ENCODE measurements at regions of chr7 and their contacts with region 1.

Region 1: GRCh38 chr7:103094102-103094501 is 19.2 kb downstream of the ARMC10 start:
- DNase-seq: peak; percentile 38
- ATAC-seq: peak; percentile 50
- H3K4me3 ChIP-seq: no peak overlapping the region
- H3K27ac ChIP-seq: no peak overlapping the region
- H3K4me1 ChIP-seq: no peaks in the 10 kb centered on the region
- H3K27me3 ChIP-seq: no peaks in the 10 kb centered on the region
- CTCF ChIP-seq: peak; percentile 55

Region 2: DNA sequence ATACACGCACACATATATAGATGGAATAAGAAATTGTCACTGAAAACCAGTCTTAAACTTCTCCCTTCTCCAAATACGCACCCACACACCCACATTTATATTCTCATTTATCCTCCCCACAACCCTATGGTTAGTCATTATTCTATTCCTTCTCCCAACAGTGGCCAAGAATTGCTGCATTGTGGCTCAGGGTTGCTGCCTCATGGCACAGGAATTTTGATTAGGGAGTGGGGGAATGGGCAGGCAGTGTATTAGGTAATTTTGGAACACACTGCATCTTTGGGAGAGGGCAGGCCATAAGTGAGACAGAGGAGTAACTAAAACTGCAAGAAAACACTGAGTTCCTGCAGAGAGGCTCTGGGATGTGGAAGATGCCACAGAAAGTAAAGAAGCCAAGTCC is 19.1 kb after region 1 on chr7:
- CTCF ChIA-PET with region 1: no interaction called
- POLR2A ChIA-PET with region 1: no interaction called
- intact Hi-C with region 1: loop called (anchors 2 kb)
- DNase-seq: peak; percentile 95
- ATAC-seq: peak; percentile 99
- H3K4me3 ChIP-seq: no peak overlapping the region
- H3K27ac ChIP-seq: peak overlapping the region; percentile 72
- H3K4me1 ChIP-seq: peaks cover 11% of the 10 kb centered on the region
- H3K27me3 ChIP-seq: no peaks in the 10 kb centered on the region
- CTCF ChIP-seq: no peak

Region 3: DNA sequence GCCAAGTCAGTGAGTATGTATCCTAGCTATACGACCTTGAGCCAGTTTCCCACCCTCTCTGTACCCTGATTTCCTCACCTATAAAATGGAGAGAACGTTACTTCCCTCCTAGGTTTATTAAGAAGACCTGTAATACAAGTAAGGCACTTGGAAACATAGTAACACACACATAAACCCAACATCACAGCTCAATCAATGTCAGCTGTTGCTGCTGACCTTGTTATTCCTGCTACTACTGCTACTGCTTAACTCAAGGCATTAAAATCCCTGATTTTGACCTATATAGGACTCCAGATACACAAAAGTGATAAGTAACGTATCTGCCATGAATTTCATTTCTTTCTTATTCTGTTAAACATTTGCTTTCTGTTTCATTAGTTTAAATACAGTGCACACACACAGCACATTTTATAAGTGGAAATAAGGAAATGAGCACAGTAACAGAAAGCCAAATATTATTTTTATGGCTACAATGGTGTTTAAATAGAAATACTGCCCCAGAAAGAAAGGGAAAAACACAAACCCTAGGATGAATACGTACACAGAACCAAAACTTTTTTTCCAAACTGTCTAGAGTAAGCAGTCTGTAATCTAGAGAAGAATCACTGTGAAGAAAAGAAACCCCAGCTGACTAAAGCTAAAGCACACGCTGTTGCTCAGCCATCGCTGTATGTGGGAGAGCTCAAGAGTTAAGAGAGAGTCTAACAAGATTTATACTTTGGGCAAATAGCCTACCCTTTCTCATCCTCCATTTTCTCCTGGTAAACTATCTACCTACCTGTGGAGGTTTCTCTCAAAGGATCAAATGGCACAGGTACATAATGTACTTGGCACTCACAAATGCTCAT is 35.8 kb after region 1 on chr7:
- CTCF ChIA-PET with region 1: no interaction called
- POLR2A ChIA-PET with region 1: no interaction called
- intact Hi-C with region 1: loop called (anchors 2 kb)
- DNase-seq: no peak
- ATAC-seq: peak; percentile 57
- H3K4me3 ChIP-seq: no peak overlapping the region
- H3K27ac ChIP-seq: no peak overlapping the region
- H3K4me1 ChIP-seq: peaks cover 8% of the 10 kb centered on the region
- H3K27me3 ChIP-seq: no peaks in the 10 kb centered on the region
- CTCF ChIP-seq: no peak

Region 4: GRCh38 chr7:103148994-103149807 is 55.1 kb after region 1 on chr7 and contains the start of gene NAPEPLD:
- CTCF ChIA-PET with region 1: no interaction called
- POLR2A ChIA-PET with region 1: no interaction called
- intact Hi-C with region 1: loop called (anchors 5 kb)
- DNase-seq: peak; percentile 83
- ATAC-seq: peak; percentile 88
- H3K4me3 ChIP-seq: peak within 1 kb of the TSS; percentile 86
- H3K27ac ChIP-seq: peak within 1 kb of the TSS; percentile 85
- H3K4me1 ChIP-seq: peaks cover 24% of the 10 kb centered on the region
- H3K27me3 ChIP-seq: no peaks in the 10 kb centered on the region
- CTCF ChIP-seq: no peak
- total RNA-seq, gene NAPEPLD: 2.5 and 3.9 TPM in 2 replicates

Measured in PC-3 (cell line).